ENCODE measurements at regions of chr2 and their contacts with region 1.

Region 1: GRCh38 chr2:74334931-74335333 is 8.3 kb downstream of the SLC4A5 start:
- DNase-seq: peak; percentile 65 to 83 (median 80)
- H3K4me3 ChIP-seq: no peak overlapping the region
- H3K27ac ChIP-seq: no peak overlapping the region
- H3K4me1 ChIP-seq: no peaks in the 10 kb centered on the region
- H3K27me3 ChIP-seq: no peaks in the 10 kb centered on the region
- CTCF ChIP-seq: peak; percentile 58 to 78 (median 66)
- EP300 ChIP-seq: no peak
- POLR2A ChIP-seq: no peak

Region 2: DNA sequence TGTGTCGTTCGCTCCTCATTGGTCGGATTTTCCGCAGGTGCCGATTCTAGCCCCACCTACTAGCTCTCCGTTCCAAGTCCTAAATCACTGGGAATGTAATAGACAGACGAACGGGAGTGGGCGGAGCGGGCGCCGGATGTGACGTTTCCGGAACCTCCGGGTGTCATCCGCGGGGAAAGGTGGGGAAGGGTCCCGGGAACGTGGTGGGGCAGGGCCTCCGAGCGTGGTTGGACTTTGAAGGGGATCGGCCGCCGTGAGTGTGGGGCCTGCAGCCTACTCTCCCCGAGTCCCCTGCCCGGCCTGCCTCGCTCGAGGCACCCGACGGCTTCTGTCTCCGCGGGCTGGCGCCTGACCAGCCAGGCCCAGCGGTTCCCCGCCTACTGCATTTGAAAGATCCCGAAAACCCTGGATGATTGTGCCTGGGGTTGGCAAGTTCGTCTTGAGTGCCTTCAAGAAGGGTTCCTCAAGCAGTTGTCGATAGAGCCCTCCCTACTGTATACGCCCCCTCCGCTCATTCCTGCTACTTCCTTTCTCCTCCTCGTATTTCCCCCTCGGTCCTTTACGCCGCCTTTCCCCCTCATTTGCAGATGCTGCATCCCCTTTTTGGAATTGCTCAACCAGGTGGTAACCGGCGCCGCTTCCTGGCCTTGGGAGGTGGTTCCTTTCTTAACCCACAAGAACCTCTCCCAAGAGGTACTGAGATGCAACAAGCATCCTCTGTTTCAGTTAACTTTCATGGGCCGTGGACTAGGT is 505.9 kb before region 1 on chr2 and contains the start of gene STAMBP:
- intact Hi-C with region 1: loop called in 2 of 4 experiments (anchors 10 kb)
- DNase-seq: peak; percentile 96 to 98 (median 97)
- H3K4me3 ChIP-seq: peak within 1 kb of the TSS; percentile 83
- H3K27ac ChIP-seq: peak within 1 kb of the TSS; percentile 56 to 96
- H3K4me1 ChIP-seq: peaks cover 9% of the 10 kb centered on the region
- H3K27me3 ChIP-seq: no peaks in the 10 kb centered on the region
- CTCF ChIP-seq: peak in 1 of 3 donors; percentile 11
- EP300 ChIP-seq: no peak
- POLR2A ChIP-seq: peak; percentile 83
- total RNA-seq, gene STAMBP: 17.0 to 34.2 (median 28.1) TPM

Region 3: GRCh38 chr2:74147727-74148456 is 187.0 kb before region 1 on chr2 and contains the start of gene BOLA3:
- intact Hi-C with region 1: loop called in 1 of 4 experiments (anchors 5 kb)
- DNase-seq: peak; percentile 68 to 87 (median 78)
- H3K4me3 ChIP-seq: peak within 1 kb of the TSS; percentile 93
- H3K27ac ChIP-seq: peak within 1 kb of the TSS in 1 of 2 donors; percentile 24
- H3K4me1 ChIP-seq: peaks cover 8% of the 10 kb centered on the region
- H3K27me3 ChIP-seq: no peaks in the 10 kb centered on the region
- CTCF ChIP-seq: peak; percentile 26 to 70 (median 62)
- EP300 ChIP-seq: no peak
- POLR2A ChIP-seq: no peak
- total RNA-seq, gene BOLA3: 8.2 to 30.1 (median 15.3) TPM

Region 4: GRCh38 chr2:74259191-74259590 is 75.7 kb before region 1 on chr2:
- intact Hi-C with region 1: loop called in 1 of 4 experiments (anchors 5 kb)
- DNase-seq: no peak
- H3K4me3 ChIP-seq: no peak overlapping the region
- H3K27ac ChIP-seq: no peak overlapping the region
- H3K4me1 ChIP-seq: no peaks in the 10 kb centered on the region
- H3K27me3 ChIP-seq: no peaks in the 10 kb centered on the region
- CTCF ChIP-seq: no peak
- EP300 ChIP-seq: no peak
- POLR2A ChIP-seq: no peak

Measured in ovary (tissue), 10 donors.